Ascending aorta (tissue), 2 donors: ENCODE measurements at regions of chr2 and their contacts with region 1.

Region 1: GRCh38 chr2:33116799-33117198 is 170.0 kb downstream of the LTBP1 start:
- DNase-seq: no peak
- H3K4me3 ChIP-seq: no peak overlapping the region
- H3K27ac ChIP-seq: no peak overlapping the region
- H3K4me1 ChIP-seq: peaks cover 0 to 17% of the 10 kb centered on the region in 2 donors
- H3K27me3 ChIP-seq: no peaks in the 10 kb centered on the region
- CTCF ChIP-seq: no peak

Region 2: GRCh38 chr2:33022989-33023727 is 93.6 kb before region 1 on chr2:
- intact Hi-C with region 1: no loop called
- DNase-seq: no peak
- H3K4me3 ChIP-seq: no peak overlapping the region
- H3K27ac ChIP-seq: peak overlapping the region in 1 of 2 donors; percentile 61
- H3K4me1 ChIP-seq: peaks cover 0 to 21% of the 10 kb centered on the region in 2 donors
- H3K27me3 ChIP-seq: no peaks in the 10 kb centered on the region
- CTCF ChIP-seq: no peak

Region 3: GRCh38 chr2:33134086-33134771 is 17.4 kb after region 1 on chr2:
- intact Hi-C with region 1: loop called (anchors 2 kb)
- DNase-seq: peak in 1 of 2 donors; percentile 93
- H3K4me3 ChIP-seq: peak overlapping the region; percentile 62 to 73
- H3K27ac ChIP-seq: peak overlapping the region; percentile 88 to 92
- H3K4me1 ChIP-seq: peaks cover 6 to 38% of the 10 kb centered on the region in 2 donors
- H3K27me3 ChIP-seq: no peaks in the 10 kb centered on the region
- CTCF ChIP-seq: peak in 1 of 3 experiments; percentile 17